ENCODE measurements at regions of chr10 and their contacts with region 1.

Region 1: GRCh38 chr10:17023386-17024298 is 106.0 kb downstream of the CUBN start:
- DNase-seq: peak; percentile 96
- H3K4me3 ChIP-seq: peak overlapping the region in 1 of 3 experiments; percentile 35
- H3K27ac ChIP-seq: peak overlapping the region; percentile 72
- H3K4me1 ChIP-seq: peaks cover 51% of the 10 kb centered on the region
- H3K27me3 ChIP-seq: no peaks in the 10 kb centered on the region
- CTCF ChIP-seq: no peak
- POLR2A ChIP-seq: peak; percentile 22

Region 2: DNA sequence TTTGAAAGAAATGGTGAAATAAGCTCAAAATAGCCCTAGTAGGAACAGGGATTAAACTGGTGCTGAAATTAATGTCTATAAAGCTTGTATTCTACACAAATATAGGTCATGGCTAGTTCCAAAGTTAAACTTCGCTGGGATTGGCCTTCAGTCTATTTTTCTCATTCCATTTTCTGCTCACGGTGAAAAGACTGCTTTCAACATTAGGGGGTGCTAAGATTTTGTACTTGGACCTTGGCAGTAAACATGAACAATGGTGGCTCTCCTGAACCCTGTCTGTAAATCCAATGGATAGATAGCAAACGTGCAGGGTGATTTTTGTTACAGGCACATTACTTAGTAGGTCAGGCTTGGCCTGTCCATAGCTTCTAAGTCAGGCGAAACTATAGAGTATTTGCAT is 170.4 kb before region 1 on chr10:
- CTCF ChIA-PET with region 1: interaction called, 4 read pairs
- POLR2A ChIA-PET with region 1: no interaction called
- dilution Hi-C with region 1: no loop called
- intact Hi-C with region 1: loop called (anchors 1 kb)
- DNase-seq: peak; percentile 73
- H3K4me3 ChIP-seq: no peak overlapping the region
- H3K27ac ChIP-seq: no peak overlapping the region
- H3K4me1 ChIP-seq: peaks cover 23% of the 10 kb centered on the region
- H3K27me3 ChIP-seq: no peaks in the 10 kb centered on the region
- CTCF ChIP-seq: peak; percentile 35 to 39
- POLR2A ChIP-seq: no peak

Region 3: DNA sequence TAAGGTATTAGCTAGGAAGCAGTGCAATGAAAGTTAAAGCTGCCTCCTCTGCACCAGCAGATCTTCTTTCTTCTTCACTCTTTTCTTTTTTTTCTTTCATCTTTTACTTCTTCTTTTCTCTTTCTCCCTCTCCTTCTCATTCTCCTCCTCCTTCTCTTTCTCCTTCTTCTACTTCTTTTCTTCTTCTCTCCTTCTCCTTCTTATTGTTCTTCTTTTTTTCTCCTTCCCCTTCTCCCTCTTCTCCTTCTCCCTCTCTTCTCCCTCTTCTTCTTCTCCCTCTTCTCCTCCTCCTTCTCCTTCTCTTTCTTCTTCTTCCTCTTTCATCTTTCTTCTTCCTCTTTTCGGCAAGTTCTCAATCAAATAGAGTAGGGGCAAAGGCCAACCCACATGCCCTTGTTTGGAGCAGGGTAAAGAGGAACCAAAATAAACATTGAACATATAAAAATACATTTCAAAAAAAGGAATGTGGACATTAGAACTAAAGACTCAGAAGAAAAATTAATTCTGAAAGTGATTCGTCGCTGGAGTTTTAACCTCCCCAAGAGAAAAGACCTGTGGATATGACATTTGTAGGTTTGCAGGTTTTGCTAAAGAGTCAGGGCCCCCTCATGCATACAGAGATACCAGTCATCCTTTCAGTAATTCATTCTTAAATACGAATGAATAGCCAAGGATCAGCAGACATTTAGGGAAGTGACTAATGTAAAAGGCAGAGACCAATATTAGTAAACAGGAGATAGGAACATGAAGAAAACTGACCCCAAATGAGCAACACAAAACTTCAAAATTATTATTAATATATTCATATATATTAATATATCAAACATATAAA is 113.5 kb before region 1 on chr10:
- CTCF ChIA-PET with region 1: no interaction called
- POLR2A ChIA-PET with region 1: no interaction called
- dilution Hi-C with region 1: no loop called
- intact Hi-C with region 1: loop called (anchors 1 kb)
- DNase-seq: peak; percentile 60
- H3K4me3 ChIP-seq: no peak overlapping the region
- H3K27ac ChIP-seq: peak overlapping the region; percentile 82
- H3K4me1 ChIP-seq: peaks cover 20% of the 10 kb centered on the region
- H3K27me3 ChIP-seq: no peaks in the 10 kb centered on the region
- CTCF ChIP-seq: no peak
- POLR2A ChIP-seq: no peak

Region 4: DNA sequence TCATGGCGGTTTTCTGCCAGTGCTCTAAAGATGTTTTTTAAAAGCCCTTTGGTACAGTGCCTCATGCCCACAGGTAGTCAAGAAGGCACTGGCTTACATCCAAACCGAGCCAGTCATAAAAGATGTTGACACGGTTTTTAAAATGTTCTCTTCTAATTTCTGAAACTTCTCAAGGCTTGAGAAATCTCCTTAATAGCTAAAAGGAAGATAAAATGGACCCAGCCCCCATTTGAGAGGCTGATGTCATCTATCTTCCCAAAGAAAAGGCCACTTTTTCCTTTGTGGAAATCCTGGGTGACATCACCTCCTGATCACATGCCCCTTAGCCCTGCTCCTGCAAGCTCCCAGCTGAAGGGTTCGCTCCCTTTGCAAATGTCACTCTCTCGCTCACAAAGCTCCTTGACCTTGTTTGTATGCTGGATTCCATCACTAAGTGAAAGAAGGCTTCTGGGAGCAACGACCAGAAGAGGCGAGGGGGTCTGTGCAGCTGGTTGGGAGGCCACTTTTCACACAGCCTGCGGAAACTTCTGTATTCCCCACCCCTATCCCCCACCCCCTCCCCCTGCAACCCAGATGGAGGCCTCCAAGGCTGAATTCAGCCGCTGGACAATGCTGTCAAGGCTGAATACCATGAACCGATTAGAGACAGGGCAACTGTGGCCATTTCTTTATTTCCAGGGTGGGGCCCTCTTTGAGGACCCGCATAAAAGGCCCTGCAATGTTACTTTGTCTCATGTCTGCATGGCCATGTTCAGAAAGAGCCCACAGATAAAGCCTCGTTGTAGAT is 16.8 kb before region 1 on chr10:
- CTCF ChIA-PET with region 1: interaction called, 4 read pairs
- POLR2A ChIA-PET with region 1: no interaction called
- dilution Hi-C with region 1: no loop called
- intact Hi-C with region 1: loop called (anchors 1 kb)
- DNase-seq: peak; percentile 88
- H3K4me3 ChIP-seq: no peak overlapping the region
- H3K27ac ChIP-seq: peak overlapping the region; percentile 89
- H3K4me1 ChIP-seq: peaks cover 63% of the 10 kb centered on the region
- H3K27me3 ChIP-seq: no peaks in the 10 kb centered on the region
- CTCF ChIP-seq: no peak
- POLR2A ChIP-seq: no peak

Region 5: GRCh38 chr10:17075533-17076359 is 52.1 kb after region 1 on chr10:
- CTCF ChIA-PET with region 1: no interaction called
- POLR2A ChIA-PET with region 1: no interaction called
- dilution Hi-C with region 1: no loop called
- intact Hi-C with region 1: loop called (anchors 1 kb)
- DNase-seq: peak; percentile 89
- H3K4me3 ChIP-seq: no peak overlapping the region
- H3K27ac ChIP-seq: peak overlapping the region; percentile 95
- H3K4me1 ChIP-seq: peaks cover 49% of the 10 kb centered on the region
- H3K27me3 ChIP-seq: no peaks in the 10 kb centered on the region
- CTCF ChIP-seq: no peak
- POLR2A ChIP-seq: no peak

Region 6: DNA sequence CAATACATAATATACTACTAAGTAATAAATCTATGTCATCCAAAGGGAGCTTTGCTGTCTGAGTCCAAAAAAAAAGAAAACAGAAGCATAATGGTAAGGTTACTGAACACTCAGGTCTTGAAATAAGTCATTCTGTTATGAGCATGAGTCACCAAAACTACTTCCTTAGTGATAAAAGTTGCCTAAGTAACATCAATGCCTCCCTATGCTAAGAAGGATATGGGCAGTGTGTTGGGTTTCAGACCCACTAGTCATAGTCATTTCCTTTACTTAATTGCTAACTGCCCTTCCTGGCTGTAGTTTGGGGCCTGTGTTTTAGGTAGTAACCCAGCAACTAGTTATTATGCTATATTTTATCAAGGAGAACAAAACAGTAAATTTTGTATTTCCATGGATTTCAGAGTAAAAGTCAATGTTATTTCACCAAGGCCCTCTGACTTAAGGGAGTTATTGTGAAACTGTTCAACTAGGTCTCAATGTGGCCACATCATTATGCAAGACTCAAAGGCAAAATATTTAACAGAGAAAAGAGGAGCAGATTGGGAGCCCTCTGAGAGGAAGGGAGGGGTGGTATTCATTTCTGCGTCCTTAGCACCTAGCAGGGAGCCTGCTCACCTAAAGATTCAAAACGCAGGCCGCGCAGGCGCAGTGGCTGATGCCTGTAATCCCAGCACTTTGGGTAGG is 192.7 kb after region 1 on chr10:
- CTCF ChIA-PET with region 1: no interaction called
- POLR2A ChIA-PET with region 1: no interaction called
- dilution Hi-C with region 1: no loop called
- intact Hi-C with region 1: loop called (anchors 1 kb)
- DNase-seq: peak; percentile 98
- H3K4me3 ChIP-seq: peak overlapping the region in 1 of 3 experiments; percentile 3
- H3K27ac ChIP-seq: peak overlapping the region; percentile 99
- H3K4me1 ChIP-seq: peaks cover 33% of the 10 kb centered on the region
- H3K27me3 ChIP-seq: no peaks in the 10 kb centered on the region
- CTCF ChIP-seq: no peak
- POLR2A ChIP-seq: peak; percentile 77

Measured in endothelial cell of umbilical vein (primary cell).